Mammary epithelial cell (primary cell): ENCODE measurements at regions of chr14 and their contacts with region 1.

Region 1: GRCh38 chr14:50619556-50620141 is 48.5 kb downstream of the SAV1 start:
- DNase-seq: peak; percentile 32
- H3K4me3 ChIP-seq: no peak overlapping the region
- H3K27ac ChIP-seq: no peak overlapping the region
- H3K4me1 ChIP-seq: peaks cover 9% of the 10 kb centered on the region
- H3K27me3 ChIP-seq: no peaks in the 10 kb centered on the region
- CTCF ChIP-seq: peak; percentile 71 to 75

Region 2: DNA sequence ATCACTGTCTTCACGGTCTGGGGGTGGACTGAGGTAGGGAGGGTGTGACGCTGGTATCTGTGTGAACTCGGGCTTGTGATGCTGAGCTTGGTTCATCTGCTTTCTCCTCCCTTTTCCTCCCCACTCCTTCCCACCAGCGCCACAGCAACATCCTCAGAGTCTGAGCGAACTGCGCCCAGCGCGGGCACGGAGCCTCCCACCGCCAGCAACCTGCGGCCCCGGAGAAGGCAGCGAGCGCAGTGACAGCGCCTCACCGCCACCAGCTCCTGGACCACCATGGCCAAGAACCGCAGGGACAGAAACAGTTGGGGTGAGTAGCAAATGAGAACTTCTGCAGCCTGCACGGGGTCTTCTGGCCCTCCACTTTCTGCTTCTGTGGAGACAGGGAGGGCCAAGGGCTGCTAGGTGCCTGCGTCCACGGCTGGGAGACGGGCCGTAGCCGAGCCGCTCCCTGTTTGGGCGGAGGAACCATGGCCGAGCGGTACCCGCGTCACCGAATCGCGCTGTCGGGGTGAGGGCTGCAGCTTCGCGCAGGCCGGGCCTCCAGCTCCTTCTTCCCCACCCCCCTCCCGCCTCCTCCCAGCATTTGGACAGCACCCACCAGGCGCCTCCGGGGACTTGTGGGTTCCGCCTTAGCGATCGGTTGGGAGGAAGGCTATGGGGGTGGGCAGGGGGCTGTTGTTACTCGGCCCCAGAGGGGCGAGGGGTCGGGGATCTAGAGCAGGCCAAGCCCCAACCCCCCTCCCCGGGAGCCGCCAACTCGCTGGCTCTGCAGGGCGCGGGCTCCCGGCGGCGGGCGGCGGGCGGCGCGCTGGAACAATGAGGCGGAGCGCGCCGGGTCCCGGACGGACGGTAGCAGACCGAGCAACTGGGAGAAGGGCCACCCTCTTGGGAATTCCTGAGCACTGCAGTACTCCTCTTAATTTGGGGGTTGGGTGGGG is 59.4 kb before region 1 on chr14 and contains the start of gene ATL1:
- CTCF ChIA-PET with region 1: no interaction called
- dilution Hi-C with region 1: no loop called
- in situ Hi-C with region 1: no loop called
- intact Hi-C with region 1: loop called (anchors 2 kb)
- DNase-seq: peak; percentile 86
- H3K4me3 ChIP-seq: peak within 1 kb of the TSS; percentile 55 to 61 (median 57)
- H3K27ac ChIP-seq: peak within 1 kb of the TSS; percentile 65
- H3K4me1 ChIP-seq: peaks cover 15% of the 10 kb centered on the region
- H3K27me3 ChIP-seq: no peaks in the 10 kb centered on the region
- CTCF ChIP-seq: peak in 1 of 2 donors; percentile 2
- total RNA-seq, gene ATL1: 7.5 to 21.2 TPM

Region 3: GRCh38 chr14:50677527-50678063 is 57.9 kb after region 1 on chr14:
- CTCF ChIA-PET with region 1: no interaction called
- dilution Hi-C with region 1: no loop called
- in situ Hi-C with region 1: no loop called
- intact Hi-C with region 1: no loop called
- DNase-seq: peak; percentile 95
- H3K4me3 ChIP-seq: peak overlapping the region; percentile 5 to 12 (median 12)
- H3K27ac ChIP-seq: peak overlapping the region; percentile 90
- H3K4me1 ChIP-seq: peaks cover 34% of the 10 kb centered on the region
- H3K27me3 ChIP-seq: no peaks in the 10 kb centered on the region
- CTCF ChIP-seq: no peak

Region 4: GRCh38 chr14:50688875-50689274 is 69.2 kb after region 1 on chr14:
- CTCF ChIA-PET with region 1: no interaction called
- dilution Hi-C with region 1: no loop called
- in situ Hi-C with region 1: no loop called
- intact Hi-C with region 1: loop called (anchors 2 kb)
- DNase-seq: peak; percentile 10
- H3K4me3 ChIP-seq: no peak overlapping the region
- H3K27ac ChIP-seq: no peak overlapping the region
- H3K4me1 ChIP-seq: no peaks in the 10 kb centered on the region
- H3K27me3 ChIP-seq: no peaks in the 10 kb centered on the region
- CTCF ChIP-seq: peak in 1 of 2 donors; percentile 47

Region 5: GRCh38 chr14:50714450-50715073 is 94.9 kb after region 1 on chr14:
- CTCF ChIA-PET with region 1: no interaction called
- dilution Hi-C with region 1: no loop called
- in situ Hi-C with region 1: no loop called
- intact Hi-C with region 1: loop called (anchors 1 kb)
- DNase-seq: peak; percentile 44
- H3K4me3 ChIP-seq: no peak overlapping the region
- H3K27ac ChIP-seq: no peak overlapping the region
- H3K4me1 ChIP-seq: no peaks in the 10 kb centered on the region
- H3K27me3 ChIP-seq: no peaks in the 10 kb centered on the region
- CTCF ChIP-seq: peak; percentile 55 to 61

Region 6: GRCh38 chr14:50762001-50762930 is 142.6 kb after region 1 on chr14:
- CTCF ChIA-PET with region 1: no interaction called
- dilution Hi-C with region 1: no loop called
- in situ Hi-C with region 1: no loop called
- intact Hi-C with region 1: no loop called
- DNase-seq: no peak
- H3K4me3 ChIP-seq: no peak overlapping the region
- H3K27ac ChIP-seq: no peak overlapping the region
- H3K4me1 ChIP-seq: no peaks in the 10 kb centered on the region
- H3K27me3 ChIP-seq: no peaks in the 10 kb centered on the region
- CTCF ChIP-seq: no peak